H1 (cell line): ENCODE measurements at regions of chr21 and their contacts with region 1.

Region 1: GRCh38 chr21:41752231-41752681 is 14.6 kb downstream of the RIPK4 start:
- DNase-seq: no peak
- H3K4me3 ChIP-seq: no peak overlapping the region
- H3K27ac ChIP-seq: no peak overlapping the region
- H3K4me1 ChIP-seq: peaks cover 9 to 36% (median 22%) of the 10 kb centered on the region in 4 experiments
- H3K27me3 ChIP-seq: no peaks in the 10 kb centered on the region; a peak in 2 of 7 replicates
- CTCF ChIP-seq: no peak
- EP300 ChIP-seq: no peak
- POLR2A ChIP-seq: no peak
- RAD21 ChIP-seq: no peak

Region 2: DNA sequence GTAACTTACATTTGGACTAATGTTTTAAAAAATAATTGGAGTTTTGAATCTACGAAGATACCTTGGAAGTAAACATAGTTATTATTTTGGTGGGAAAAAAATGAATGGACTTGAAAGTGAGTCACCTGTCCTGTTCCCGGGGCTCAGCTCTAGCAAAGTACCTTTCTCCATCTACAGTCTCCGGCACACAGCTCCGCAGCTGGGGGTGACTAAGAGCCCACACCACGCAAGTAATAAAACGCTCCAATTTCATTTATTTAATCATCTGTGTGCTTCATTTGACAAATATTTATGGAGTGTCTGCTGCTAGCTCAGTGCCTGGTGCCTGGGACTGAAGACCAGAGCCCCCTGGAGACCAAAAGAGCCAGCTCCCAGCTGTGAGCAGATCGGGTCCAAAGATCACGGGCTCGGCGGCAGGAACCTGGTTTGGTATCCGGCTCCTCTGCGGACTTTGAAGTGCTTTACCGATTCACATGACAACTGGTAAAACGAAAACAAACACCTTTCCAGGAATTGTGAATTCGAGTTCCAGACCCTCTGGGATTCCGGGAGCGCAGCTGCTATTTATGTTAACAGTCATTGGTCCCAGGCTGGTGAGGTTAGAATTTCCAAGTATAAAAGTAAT is 16.3 kb after region 1 on chr21:
- CTCF ChIA-PET with region 1: interaction called, 37 read pairs
- POLR2A ChIA-PET with region 1: interaction called, 23 read pairs
- DNase-seq: no peak
- H3K4me3 ChIP-seq: peak overlapping the region; percentile 19 to 73 (median 36); a peak in 7 of 8 replicates
- H3K27ac ChIP-seq: no peak overlapping the region
- H3K4me1 ChIP-seq: peaks cover 12 to 36% (median 29%) of the 10 kb centered on the region in 4 experiments
- H3K27me3 ChIP-seq: peaks cover 33 to 86% (median 77%) of the 10 kb centered on the region in 4 experiments
- CTCF ChIP-seq: peak in 2 of 3 experiments; percentile 6 to 13; a peak in 3 of 4 replicates
- EP300 ChIP-seq: peak in 1 of 2 experiments; percentile 9; a peak in 1 of 3 replicates
- POLR2A ChIP-seq: no peak
- RAD21 ChIP-seq: peak in 1 of 2 experiments; percentile 24; a peak in 1 of 4 replicates

Region 3: DNA sequence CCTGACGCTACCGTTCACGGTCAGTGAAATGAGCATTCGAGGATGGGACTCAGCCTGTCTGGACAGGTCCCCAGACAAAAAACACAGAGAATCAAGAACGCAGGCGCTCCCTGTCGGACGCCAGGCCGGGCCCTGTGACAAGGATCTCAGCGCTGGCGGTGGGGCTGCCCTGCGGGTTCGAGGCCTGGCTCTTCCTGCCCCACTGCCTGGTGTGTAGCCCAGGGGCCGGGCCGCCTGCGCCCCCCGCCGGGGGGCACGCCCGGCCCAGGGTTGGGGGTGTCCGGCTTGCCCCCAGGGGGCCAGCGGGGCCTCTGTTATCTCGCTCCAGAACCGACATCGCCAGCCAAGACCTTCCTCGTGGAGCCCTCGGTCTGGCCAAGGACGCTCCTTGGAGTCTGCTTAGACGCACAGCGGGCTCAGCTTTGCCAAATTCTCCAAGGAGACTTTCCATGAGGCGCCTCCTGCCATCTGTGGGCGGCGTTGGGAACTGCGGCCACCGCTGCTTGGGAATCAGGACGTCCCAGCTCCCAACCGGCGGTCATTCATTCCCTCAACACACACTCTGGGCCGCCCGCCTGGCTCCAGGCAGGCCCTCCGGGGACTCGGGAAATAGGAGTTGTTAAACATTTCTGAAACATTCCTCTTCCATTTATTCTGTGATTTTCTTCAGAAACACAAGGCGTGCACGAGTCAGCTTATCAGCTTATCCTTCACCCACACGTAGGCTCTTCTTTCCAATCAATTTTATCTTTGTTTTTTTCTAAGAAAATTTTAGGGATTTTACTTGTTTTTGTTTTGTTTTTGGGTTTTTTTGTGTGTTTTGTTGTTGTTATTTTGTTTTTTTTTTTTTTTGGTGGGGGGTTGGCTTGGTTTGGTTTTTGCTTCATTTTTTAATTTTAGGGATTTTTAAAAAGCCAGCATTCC is 26.0 kb after region 1 on chr21:
- CTCF ChIA-PET with region 1: interaction called, 12 read pairs
- POLR2A ChIA-PET with region 1: no interaction called
- DNase-seq: peak; percentile 79 to 97
- H3K4me3 ChIP-seq: peak overlapping the region in 1 of 4 experiments; percentile 50; a peak in 4 of 8 replicates
- H3K27ac ChIP-seq: no peak overlapping the region; the same call in 1 of the 2 replicates
- H3K4me1 ChIP-seq: peaks cover 2 to 12% (median 5%) of the 10 kb centered on the region in 4 experiments; a peak in 5 of 7 replicates
- H3K27me3 ChIP-seq: peaks cover 0 to 3% (median under 1%) of the 10 kb centered on the region in 4 experiments; a peak in 4 of 7 replicates
- CTCF ChIP-seq: peak; percentile 81 to 90 (median 86)
- EP300 ChIP-seq: no peak
- POLR2A ChIP-seq: no peak; a peak in 1 of 3 replicates
- RAD21 ChIP-seq: peak; percentile 85 to 91

Region 4: GRCh38 chr21:42737951-42738590 is 985.8 kb after region 1 on chr21:
- CTCF ChIA-PET with region 1: no interaction called
- POLR2A ChIA-PET with region 1: no interaction called
- DNase-seq: no peak
- H3K4me3 ChIP-seq: no peak overlapping the region
- H3K27ac ChIP-seq: no peak overlapping the region
- H3K4me1 ChIP-seq: peaks cover under 1 to 3% (median 2%) of the 10 kb centered on the region in 4 experiments; a peak in 3 of 7 replicates
- H3K27me3 ChIP-seq: no peaks in the 10 kb centered on the region
- CTCF ChIP-seq: no peak
- EP300 ChIP-seq: no peak
- POLR2A ChIP-seq: no peak
- RAD21 ChIP-seq: no peak